ENCODE measurements at regions of chr17 and their contacts with region 1.

Region 1: DNA sequence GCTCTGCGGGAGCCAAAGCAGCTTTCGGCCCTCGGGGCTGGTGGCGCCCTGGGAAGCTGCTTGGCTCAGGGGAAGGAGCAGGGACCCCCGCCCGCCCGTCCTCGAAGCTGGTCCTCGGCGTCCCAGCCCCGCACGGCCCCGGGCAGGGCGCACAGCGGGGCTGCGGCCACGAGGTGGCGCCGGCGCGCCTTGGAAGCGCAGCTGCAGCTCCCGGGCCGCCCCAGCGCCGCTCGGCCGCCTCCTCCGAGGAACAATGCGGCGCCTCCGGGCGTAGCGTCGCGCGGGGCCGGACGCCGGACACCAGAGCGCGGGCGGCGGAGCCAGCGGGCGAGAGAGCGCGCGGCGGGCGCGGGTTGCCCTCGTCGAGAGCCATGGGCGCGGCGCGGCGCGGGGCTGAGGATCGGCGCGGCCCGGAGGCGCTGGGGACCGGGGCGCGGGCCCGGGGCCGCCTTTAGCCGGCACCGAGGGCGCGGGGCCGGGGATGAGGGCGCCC is at the start of gene MGAT5B:
- DNase-seq: peak; percentile 76 to 91
- ATAC-seq: peak; percentile 94 to 97 (median 96)
- H3K4me3 ChIP-seq: no peak within 1 kb of the TSS
- H3K4me3 Mint-ChIP-seq: peak within 1 kb of the TSS; percentile 87
- H3K27ac ChIP-seq: no peak within 1 kb of the TSS
- H3K27ac Mint-ChIP-seq: no peak within 1 kb of the TSS
- H3K4me1 ChIP-seq: peaks cover 11% of the 10 kb centered on the region
- H3K4me1 Mint-ChIP-seq: peaks cover 0 to 15% of the 10 kb centered on the region in 2 donors
- H3K27me3 ChIP-seq: peaks cover 23% of the 10 kb centered on the region
- H3K27me3 Mint-ChIP-seq: peaks cover 29 to 31% of the 10 kb centered on the region in 2 donors
- CTCF ChIP-seq: peak; percentile 74
- total RNA-seq, gene MGAT5B: not detected

Region 2: GRCh38 chr17:77054936-77055335 is 186.7 kb after region 1 on chr17:
- intact Hi-C with region 1: loop called (anchors 2 kb)
- DNase-seq: no peak
- ATAC-seq: no peak
- H3K4me3 ChIP-seq: no peak overlapping the region
- H3K4me3 Mint-ChIP-seq: no peak overlapping the region
- H3K27ac ChIP-seq: no peak overlapping the region
- H3K27ac Mint-ChIP-seq: no peak overlapping the region
- H3K4me1 ChIP-seq: peaks cover 5% of the 10 kb centered on the region
- H3K4me1 Mint-ChIP-seq: peaks cover 5% of the 10 kb centered on the region in 2 donors
- H3K27me3 ChIP-seq: no peaks in the 10 kb centered on the region
- H3K27me3 Mint-ChIP-seq: peaks cover 0 to 9% of the 10 kb centered on the region in 2 donors
- CTCF ChIP-seq: no peak

Region 3: GRCh38 chr17:77066165-77066564 is 197.9 kb after region 1 on chr17:
- intact Hi-C with region 1: loop called (anchors 1 kb)
- DNase-seq: no peak
- ATAC-seq: no peak
- H3K4me3 ChIP-seq: no peak overlapping the region
- H3K4me3 Mint-ChIP-seq: no peak overlapping the region
- H3K27ac ChIP-seq: no peak overlapping the region
- H3K27ac Mint-ChIP-seq: no peak overlapping the region
- H3K4me1 ChIP-seq: peaks cover 3% of the 10 kb centered on the region
- H3K4me1 Mint-ChIP-seq: peaks cover 5% of the 10 kb centered on the region in 2 donors
- H3K27me3 ChIP-seq: no peaks in the 10 kb centered on the region
- H3K27me3 Mint-ChIP-seq: peaks cover 7 to 22% of the 10 kb centered on the region in 2 donors
- CTCF ChIP-seq: no peak

Measured in natural killer cell (primary cell).